BJ (cell line): ENCODE measurements at regions of chr3 and their contacts with region 1.

Region 1: GRCh38 chr3:185070491-185071286 is 82.2 kb downstream of the C3orf70 start:
- DNase-seq: no peak
- H3K4me3 ChIP-seq: no peak overlapping the region
- H3K27me3 ChIP-seq: no peaks in the 10 kb centered on the region
- CTCF ChIP-seq: peak; percentile 66

Region 2: GRCh38 chr3:185084901-185085300 is 14.2 kb after region 1 on chr3:
- CTCF ChIA-PET with region 1: interaction called, 10 read pairs
- POLR2A ChIA-PET with region 1: no interaction called
- DNase-seq: peak; percentile 65
- H3K4me3 ChIP-seq: no peak overlapping the region
- H3K27me3 ChIP-seq: no peaks in the 10 kb centered on the region
- CTCF ChIP-seq: peak; percentile 77

Region 3: GRCh38 chr3:185992831-185993374 is 922.2 kb after region 1 on chr3:
- CTCF ChIA-PET with region 1: no interaction called
- POLR2A ChIA-PET with region 1: no interaction called
- DNase-seq: peak; percentile 11
- H3K4me3 ChIP-seq: no peak overlapping the region
- H3K27me3 ChIP-seq: 0 out of 2 replicates have a peak, but pooled peaks cover 3% of the 10 kb centered on the region
- CTCF ChIP-seq: no peak